Natural killer cell (primary cell): ENCODE measurements at regions of chr2 and their contacts with region 1.

Region 1: DNA sequence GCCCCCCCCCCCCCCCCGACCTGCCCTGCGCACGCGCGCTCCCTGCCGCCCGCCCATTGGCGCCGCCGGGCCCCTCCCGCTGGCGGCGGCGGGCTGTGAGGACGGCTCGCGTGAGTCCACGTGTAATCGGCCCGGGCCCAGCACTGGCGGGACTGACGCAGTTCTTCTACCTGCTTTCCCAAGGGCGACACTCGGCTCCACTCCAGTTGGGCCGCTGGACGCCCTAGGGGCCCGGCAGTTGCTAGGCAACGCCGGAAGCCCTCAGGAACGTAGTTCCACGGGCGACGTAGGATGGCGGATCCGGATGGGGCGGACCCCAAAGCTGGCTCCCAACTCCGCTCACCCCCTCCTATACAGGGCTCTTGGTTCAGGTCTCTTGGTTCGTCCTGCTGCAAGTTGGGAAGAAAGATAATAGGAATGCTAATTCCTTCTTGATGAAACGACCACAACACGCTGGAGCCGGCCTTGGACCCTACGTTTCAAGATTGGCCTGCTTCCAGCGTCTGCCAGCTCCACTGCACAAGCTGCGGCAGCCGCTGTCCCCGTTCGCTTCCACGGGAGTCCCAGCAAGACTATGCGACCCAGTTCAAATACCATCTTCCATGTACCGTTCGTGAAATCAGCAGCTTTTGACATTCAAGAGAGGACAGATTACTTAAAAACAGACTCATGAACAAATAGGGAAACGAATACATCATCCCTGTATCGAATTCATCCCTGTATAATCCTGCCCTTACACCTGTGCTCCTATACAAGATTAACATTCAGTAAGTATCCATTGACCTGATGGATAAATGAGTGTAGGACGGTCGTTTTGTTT is 415 bp upstream of the MCFD2 start:
- DNase-seq: peak; percentile 76 to 91
- ATAC-seq: peak; percentile 85 to 90 (median 88)
- H3K4me3 ChIP-seq: peak overlapping the region; percentile 98
- H3K4me3 Mint-ChIP-seq: peak overlapping the region; percentile 93
- H3K27ac ChIP-seq: peak overlapping the region; percentile 87
- H3K27ac Mint-ChIP-seq: peak overlapping the region; percentile 82 to 83
- H3K4me1 ChIP-seq: peaks cover 27% of the 10 kb centered on the region
- H3K4me1 Mint-ChIP-seq: peaks cover 31 to 42% of the 10 kb centered on the region in 2 donors
- H3K27me3 ChIP-seq: no peaks in the 10 kb centered on the region
- H3K27me3 Mint-ChIP-seq: no peaks in the 10 kb centered on the region
- CTCF ChIP-seq: no peak

Region 2: GRCh38 chr2:46979571-46979979 is 63.6 kb after region 1 on chr2:
- intact Hi-C with region 1: loop called (anchors 5 kb)
- DNase-seq: peak; percentile 42 to 65
- ATAC-seq: peak; percentile 82 to 87 (median 82)
- H3K4me3 ChIP-seq: no peak overlapping the region
- H3K4me3 Mint-ChIP-seq: peak overlapping the region; percentile 77
- H3K27ac ChIP-seq: peak overlapping the region; percentile 50
- H3K27ac Mint-ChIP-seq: peak overlapping the region; percentile 87 to 89
- H3K4me1 ChIP-seq: peaks cover 68% of the 10 kb centered on the region
- H3K4me1 Mint-ChIP-seq: peaks cover 25 to 31% of the 10 kb centered on the region in 2 donors
- H3K27me3 ChIP-seq: no peaks in the 10 kb centered on the region
- H3K27me3 Mint-ChIP-seq: no peaks in the 10 kb centered on the region
- CTCF ChIP-seq: no peak

Region 3: GRCh38 chr2:47225061-47225859 is 309.2 kb after region 1 on chr2:
- intact Hi-C with region 1: no loop called
- DNase-seq: no peak
- ATAC-seq: no peak
- H3K4me3 ChIP-seq: no peak overlapping the region
- H3K4me3 Mint-ChIP-seq: no peak overlapping the region
- H3K27ac ChIP-seq: no peak overlapping the region
- H3K27ac Mint-ChIP-seq: no peak overlapping the region
- H3K4me1 ChIP-seq: no peaks in the 10 kb centered on the region
- H3K4me1 Mint-ChIP-seq: no peaks in the 10 kb centered on the region
- H3K27me3 ChIP-seq: no peaks in the 10 kb centered on the region
- H3K27me3 Mint-ChIP-seq: no peaks in the 10 kb centered on the region
- CTCF ChIP-seq: no peak

Region 4: GRCh38 chr2:47323009-47323821 is 407.2 kb after region 1 on chr2:
- intact Hi-C with region 1: loop called (anchors 2 kb)
- DNase-seq: peak; percentile 60 to 77
- ATAC-seq: peak; percentile 92 to 100 (median 99)
- H3K4me3 ChIP-seq: no peak overlapping the region
- H3K4me3 Mint-ChIP-seq: no peak overlapping the region
- H3K27ac ChIP-seq: no peak overlapping the region
- H3K27ac Mint-ChIP-seq: no peak overlapping the region
- H3K4me1 ChIP-seq: peaks cover 6% of the 10 kb centered on the region
- H3K4me1 Mint-ChIP-seq: no peaks in the 10 kb centered on the region
- H3K27me3 ChIP-seq: no peaks in the 10 kb centered on the region
- H3K27me3 Mint-ChIP-seq: no peaks in the 10 kb centered on the region
- CTCF ChIP-seq: peak; percentile 77